GM10248 (cell line): ENCODE measurements at regions of chr19 and their contacts with region 1.

Region 1: DNA sequence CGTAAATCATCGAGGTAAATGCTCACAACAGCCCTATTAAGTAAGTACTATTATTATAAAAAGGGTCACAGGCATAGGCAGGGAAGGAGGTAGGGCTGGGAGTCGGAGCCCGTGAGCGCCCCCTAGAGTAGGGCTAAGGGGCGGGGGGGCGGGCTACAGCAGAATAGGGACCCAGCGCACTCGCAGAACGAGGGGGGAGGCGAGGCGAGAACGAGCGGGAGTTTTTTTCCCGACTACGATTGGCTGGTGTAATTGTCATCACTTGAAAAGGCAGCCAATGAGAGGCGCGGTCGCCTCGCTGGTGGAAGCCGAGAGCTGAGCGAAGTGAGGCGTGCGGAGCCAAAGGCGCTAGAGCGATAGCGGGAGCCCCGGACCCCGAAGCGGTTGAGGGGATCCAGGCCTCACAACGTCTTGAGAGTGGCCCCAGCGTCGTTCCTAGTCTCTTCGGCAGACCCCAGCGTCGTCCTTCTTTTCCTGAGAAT is 24.2 kb downstream of the KEAP1 start:
- DNase-seq: peak; percentile 58
- CTCF ChIP-seq: peak; percentile 9

Region 2: DNA sequence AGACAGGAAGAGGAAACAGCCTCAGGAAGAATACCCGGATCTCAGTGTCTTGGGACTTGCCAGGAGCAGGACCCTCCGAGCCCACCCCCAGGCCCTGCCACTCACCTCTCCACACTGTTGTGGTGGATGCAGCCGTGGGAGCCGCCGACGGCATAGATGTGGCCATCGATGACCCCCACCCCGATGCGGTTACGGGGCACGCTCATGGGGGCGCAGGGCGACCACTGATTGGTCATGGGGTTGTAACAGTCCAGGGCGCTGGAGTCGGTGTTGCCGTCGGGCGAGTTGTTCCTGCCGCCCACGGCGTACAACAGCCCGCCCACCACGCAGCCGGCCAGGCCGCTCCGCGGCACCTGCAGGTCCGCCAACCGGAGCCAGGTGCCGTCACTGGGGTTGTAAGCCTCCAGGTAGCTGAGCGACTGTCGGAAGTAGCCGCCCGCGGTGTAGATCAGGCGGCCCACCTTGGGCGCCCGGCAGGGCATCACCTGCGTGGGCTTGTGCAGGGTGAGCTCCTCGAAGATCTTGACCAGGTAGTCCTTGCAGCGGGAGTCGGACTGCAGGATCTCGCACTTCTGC is 12.6 kb after region 1 on chr19:
- CTCF ChIA-PET with region 1: interaction called, 25 read pairs
- POLR2A ChIA-PET with region 1: no interaction called
- DNase-seq: no peak
- CTCF ChIP-seq: no peak